ENCODE measurements at regions of chr17 and their contacts with region 1.

Region 1: DNA sequence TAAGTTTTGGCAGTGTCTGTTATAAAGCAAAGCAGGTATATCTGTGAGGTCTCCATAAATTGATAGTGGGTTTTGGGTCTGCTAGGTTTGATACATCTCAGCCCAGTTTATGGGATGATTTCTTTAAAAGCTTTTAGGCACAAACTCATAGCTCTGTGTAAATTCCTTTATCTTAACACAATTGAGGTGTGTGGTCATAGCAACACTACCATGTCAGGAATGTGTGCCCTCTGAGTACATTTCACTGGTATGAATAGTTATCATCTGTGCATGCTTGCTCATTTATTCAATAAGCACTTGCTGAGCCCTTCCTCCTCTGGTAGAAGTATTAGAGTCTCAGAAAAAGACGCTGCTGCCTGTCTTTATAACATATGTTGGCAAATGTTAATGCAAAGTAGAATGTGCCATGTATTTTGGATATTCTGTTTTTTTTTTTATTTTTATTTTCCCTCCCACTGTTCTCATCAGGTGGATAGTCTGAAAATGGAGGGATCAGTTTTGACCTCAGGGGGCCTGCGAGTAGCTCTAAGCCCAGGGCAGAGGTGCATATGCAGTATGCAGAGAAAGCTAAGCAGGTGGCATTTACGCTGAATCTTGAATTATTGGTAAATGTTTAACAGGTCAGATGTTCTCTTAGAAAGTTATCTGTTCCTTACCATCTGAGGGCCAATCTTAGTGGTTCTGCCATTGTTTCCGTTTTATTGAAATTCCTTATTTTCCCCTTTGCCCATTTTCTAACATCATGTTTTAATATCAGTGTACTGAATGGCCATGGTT is 90.7 kb downstream of the WNT3 start:
- DNase-seq: no peak
- ATAC-seq: no peak
- H3K4me3 ChIP-seq: no peak overlapping the region
- H3K27ac ChIP-seq: no peak overlapping the region
- H3K4me1 ChIP-seq: 0 out of 2 replicates have a peak, but pooled peaks cover 3% of the 10 kb centered on the region
- H3K27me3 ChIP-seq: no peaks in the 10 kb centered on the region
- CTCF ChIP-seq: no peak
- EP300 ChIP-seq: no peak
- POLR2A ChIP-seq: no peak
- RAD21 ChIP-seq: no peak

Region 2: DNA sequence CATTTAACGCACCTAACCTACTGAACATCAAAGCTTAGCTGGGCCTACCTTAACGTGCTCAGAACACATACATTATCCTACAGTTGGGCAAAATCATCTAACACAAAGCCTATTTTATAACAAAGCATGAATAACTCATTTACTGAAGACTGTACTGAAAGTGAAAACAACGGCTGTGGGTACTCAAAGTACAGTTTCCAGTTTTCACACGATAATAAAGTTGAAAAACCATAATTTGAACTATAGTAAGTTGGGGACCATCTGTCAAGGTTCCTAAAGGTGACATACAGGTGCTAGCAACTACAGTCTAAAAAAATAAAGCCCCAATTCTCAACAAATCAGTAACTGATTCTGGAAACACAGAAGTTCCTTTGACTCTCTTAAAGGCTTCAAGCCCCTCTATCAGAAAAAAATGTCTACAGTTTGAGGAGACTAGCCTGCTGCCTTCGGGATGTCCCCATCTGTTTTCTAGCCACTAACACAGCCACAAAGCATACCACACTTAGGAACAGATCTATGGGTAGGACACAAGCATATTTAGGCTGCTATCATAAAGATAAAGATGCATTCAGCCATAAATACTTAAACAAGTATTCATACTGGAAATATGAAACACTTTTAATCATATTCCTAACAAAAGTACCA is 605.8 kb before region 1 on chr17:
- CTCF ChIA-PET with region 1: no interaction called
- POLR2A ChIA-PET with region 1: no interaction called
- RAD21 ChIA-PET with region 1: no interaction called
- SMC1A ChIA-PET with region 1: no interaction called
- in situ Hi-C with region 1: no loop called
- intact Hi-C with region 1: no loop called
- DNase-seq: peak; percentile 65
- ATAC-seq: peak; percentile 81
- H3K4me3 ChIP-seq: peak overlapping the region; percentile 33
- H3K27ac ChIP-seq: peak overlapping the region; percentile 62
- H3K4me1 ChIP-seq: peaks cover 59% of the 10 kb centered on the region
- H3K27me3 ChIP-seq: no peaks in the 10 kb centered on the region
- CTCF ChIP-seq: no peak
- EP300 ChIP-seq: peak; percentile 33 to 59; a peak in 3 of 4 replicates
- POLR2A ChIP-seq: no peak
- RAD21 ChIP-seq: no peak

Region 3: DNA sequence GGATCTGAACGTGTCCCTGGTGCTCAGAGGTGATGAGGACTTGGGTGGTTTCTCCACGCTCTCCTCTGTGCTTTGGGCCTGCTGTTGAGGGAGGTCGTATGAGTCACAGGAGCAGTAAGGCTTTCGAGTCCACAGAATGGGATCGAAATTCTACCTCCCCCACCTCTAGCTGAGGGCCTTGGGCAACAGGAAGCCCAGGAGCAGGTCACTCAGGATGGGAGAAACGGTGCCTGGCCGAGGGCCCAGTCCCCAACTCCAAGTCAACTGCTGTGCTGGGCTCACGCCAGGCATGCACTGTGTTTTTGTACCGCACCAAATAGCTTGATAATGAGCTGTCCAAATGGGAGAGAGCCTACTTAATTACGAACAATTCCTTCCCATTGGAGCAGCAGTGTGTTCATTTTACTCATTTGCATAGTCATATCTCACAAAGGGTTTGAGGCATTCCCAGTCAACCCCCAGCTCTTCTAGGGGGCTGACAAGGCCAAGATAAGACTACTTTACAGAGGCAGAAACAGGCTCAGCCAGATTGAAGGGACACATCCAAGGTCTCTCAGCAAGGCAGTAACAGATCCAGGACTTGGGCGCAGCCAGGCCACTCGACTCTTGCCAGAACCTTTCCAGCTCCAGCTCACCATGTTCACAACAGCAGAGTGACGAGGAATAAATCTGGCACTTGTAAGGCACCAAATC is 37.1 kb after region 1 on chr17:
- CTCF ChIA-PET with region 1: no interaction called
- POLR2A ChIA-PET with region 1: no interaction called
- RAD21 ChIA-PET with region 1: no interaction called
- SMC1A ChIA-PET with region 1: no interaction called
- in situ Hi-C with region 1: loop called (anchors 5 kb)
- intact Hi-C with region 1: no loop called
- DNase-seq: no peak
- ATAC-seq: no peak
- H3K4me3 ChIP-seq: no peak overlapping the region
- H3K27ac ChIP-seq: no peak overlapping the region
- H3K4me1 ChIP-seq: no peaks in the 10 kb centered on the region
- H3K27me3 ChIP-seq: peaks cover 0 to 1% of the 10 kb centered on the region in 2 experiments; a peak in 2 of 4 replicates
- CTCF ChIP-seq: no peak
- EP300 ChIP-seq: no peak
- POLR2A ChIP-seq: no peak
- RAD21 ChIP-seq: no peak

Measured in GM12878 (cell line).